ENCODE measurements at regions of chr13 and their contacts with region 1.

Region 1: DNA sequence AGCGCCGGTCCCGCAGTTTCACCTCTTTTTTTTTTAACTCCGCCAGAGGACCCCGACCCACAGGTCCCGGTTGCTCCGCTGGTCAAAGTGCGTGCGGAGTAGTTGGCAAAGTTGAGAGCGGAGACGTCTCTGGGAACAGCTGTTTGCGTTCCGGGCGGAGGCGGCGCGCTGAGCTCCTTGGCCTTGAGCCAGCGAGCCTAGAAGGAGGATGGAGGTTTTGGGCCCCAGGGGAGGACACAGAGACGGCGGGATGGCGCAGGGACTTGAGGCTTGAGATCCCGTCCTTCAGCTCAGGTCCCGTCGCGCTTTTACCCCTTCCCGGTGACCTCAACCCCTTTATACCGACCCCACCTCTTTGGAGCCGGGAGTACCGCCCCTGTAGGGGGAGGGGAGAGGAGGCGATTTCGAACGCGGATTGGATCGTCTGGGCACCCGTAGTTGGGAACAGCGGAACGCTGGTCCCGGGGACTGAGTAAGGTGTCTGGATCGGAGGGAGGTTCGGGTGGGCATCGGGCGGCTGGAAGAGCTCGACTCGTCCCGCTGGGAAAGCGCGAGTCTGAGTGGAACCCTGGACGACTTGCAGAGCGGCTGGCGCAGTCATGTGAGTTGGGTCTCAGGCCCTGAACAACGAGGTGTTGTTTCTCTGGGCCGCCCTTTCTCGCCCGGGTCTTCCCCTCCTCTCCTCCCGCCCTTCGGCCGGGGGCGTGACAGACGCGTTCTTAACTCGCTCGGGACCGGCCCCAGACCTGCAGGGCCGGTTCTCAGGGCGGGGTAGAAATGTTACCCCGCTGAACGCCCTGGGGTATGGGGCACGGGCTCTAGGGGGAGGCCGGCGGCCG is at the start of gene WBP4:
- DNase-seq: peak; percentile 81 to 98 (median 93)

Region 2: DNA sequence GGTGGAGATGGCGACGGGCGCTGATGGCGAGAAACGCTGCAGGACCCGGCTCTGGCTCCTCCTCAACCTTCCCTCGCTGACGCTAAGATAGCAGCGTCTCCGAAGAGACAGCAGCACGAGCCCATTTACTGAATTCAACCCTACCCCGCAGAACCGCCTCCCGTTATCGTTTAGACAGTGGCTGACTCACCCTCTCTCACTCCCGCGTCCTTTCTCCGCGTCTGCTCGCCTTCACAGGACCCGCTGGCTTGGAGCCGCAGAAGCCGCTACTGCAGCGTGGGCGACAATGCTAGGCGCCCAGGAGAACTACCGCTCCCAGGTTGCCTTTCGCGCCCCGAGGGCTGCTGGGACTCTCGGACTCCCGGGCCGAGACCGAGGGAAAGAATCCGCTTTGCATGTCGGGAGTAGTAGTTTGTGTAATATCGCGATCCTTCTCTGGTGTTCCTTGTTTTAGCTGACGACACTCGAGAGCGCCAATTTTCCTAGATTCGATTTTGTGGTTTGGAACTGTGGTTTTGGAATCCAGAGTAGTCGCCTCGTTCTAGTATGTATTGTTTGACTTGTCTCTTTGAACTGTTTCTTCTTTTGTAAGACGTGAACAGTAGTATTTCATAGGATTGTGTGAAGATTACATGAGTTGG is 71.3 kb after region 1 on chr13 and contains the start of gene KBTBD6:
- intact Hi-C with region 1: loop called (anchors 10 kb)
- DNase-seq: peak; percentile 95 to 99 (median 98)

Region 3: DNA sequence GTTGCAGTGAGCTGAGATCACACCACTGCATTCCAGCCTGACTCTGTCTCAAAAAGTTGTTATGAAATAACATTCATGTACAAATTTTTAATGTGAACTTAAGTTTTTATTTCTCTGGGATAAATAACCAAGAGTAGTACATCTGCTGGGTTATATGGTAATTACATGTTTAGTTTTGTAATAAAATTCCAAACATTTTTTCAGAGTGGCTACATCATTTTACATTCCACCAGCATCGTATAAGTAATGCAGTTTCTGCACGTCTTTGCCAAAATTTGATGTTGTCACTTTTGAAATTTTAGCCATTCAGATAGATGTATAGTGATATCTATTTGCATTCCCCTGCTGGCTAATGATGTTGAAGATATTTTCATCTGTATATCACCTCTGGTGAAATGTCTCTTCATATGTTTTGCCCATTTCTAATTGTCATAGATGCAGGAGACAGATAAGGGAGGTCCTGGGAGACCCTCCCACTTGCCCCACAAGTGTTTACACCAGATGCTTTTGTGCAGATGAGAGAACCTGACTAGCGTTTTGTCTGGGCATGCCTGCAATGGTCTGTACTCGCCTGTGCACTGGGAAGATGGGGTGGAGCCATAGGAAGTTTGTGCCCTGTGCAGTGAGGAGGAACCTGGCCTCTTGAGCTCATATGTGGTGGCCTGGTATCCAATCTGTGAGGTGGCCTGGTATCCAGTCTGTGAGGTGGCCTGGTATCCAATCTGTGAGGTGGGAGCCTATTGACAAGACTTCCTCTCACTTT is 84.0 kb after region 1 on chr13:
- intact Hi-C with region 1: no loop called
- DNase-seq: no peak

Region 4: GRCh38 chr13:41310963-41311606 is 249.8 kb after region 1 on chr13 and contains the start of gene NAA16:
- intact Hi-C with region 1: loop called (anchors 5 kb)
- DNase-seq: peak; percentile 78 to 97 (median 92)

Region 5: DNA sequence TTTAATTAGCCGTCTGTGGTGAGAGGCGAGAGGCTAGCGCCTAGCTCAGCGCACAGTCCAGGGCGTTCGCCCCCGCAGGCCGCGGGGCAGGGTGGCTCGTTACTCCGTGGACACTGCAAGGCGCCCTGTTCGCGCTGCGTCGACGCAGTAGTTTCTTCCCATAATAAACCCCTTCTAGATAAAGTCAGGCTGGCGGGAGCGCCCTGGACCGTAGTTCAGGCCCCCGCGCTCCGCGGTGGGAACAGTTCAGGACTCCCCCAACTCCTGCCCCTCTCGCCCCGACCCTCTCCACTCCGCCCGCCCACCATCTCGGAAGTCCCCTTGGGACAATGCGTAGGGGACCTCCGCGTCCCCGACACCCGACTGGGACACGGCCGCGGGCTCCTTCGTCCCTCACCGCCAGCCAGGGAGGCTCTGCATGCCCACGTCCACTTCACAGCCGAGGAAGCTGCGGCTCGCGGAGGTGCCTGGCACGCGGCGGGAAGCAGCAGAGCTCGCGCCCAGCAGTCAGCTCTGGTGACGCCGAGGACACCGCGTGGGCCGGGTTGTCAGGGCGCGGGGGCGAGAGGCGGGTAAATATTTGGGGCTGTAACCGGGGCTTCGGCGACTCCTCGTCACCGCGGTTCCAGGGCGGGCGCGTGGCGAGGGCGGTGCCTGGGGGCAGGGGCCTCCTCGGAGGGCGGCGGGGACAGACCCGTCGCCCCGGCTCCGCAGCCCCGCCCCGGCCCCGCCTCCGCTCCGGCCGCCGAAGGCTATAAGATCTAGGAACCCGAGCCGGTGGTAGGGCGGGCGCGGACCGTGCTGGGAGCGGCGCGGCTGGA is 395.7 kb after region 1 on chr13 and contains the start of gene RGCC:
- intact Hi-C with region 1: no loop called
- DNase-seq: peak; percentile 72 to 96 (median 89)